ENCODE measurements at regions of chr5 and their contacts with region 1.

Region 1: DNA sequence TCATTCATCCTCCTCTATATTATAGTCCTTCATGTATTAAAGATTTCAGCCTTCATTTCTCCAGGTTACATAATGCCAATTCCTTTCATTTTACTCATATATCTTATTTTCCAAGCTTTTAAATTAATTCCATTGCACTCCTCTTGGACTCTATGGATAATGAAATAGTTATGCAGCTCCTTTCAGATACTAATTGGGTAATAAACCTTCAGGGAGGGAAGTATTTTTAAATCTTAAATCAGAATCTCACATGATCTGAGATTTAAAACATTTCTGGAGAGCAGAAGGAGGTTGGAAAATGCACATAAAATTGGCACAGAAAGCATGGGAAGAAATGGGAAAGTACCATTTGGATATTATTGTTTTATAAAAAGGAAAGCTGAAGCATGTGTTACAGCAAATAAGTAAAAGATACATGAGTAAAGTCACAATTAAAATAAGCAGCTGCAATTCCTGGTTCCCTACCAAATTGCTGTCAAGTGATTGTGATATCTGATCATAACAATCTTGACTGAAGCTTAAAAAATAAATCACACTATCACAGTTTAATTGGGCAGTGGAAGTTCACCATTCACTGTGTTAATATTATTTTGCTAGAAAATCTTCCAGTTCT is 257.9 kb upstream of the NREP start:
- DNase-seq: no peak
- H3K4me3 ChIP-seq: no peak overlapping the region
- H3K27ac ChIP-seq: no peak overlapping the region
- H3K4me1 ChIP-seq: no peaks in the 10 kb centered on the region
- H3K27me3 ChIP-seq: no peaks in the 10 kb centered on the region
- CTCF ChIP-seq: no peak
- POLR2A ChIP-seq: no peak

Region 2: DNA sequence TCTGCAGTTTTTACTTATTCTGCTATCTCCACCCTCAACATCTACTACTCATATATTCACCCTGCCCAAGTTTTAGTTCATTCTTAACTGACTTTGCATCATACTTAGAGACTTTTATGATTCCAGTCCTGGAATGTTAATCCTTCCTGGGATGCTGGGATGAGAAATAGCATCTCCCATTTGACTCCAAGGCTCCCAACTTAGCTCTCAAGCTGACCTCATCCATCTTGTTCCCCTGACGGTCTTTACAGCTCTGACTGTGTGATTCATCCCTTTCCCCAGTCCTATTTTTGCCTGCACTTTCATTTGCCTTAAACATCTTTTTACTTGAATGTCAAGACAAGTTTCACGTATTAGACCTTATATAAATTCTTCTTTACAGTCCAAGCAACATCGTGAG is 106.4 kb after region 1 on chr5:
- CTCF ChIA-PET with region 1: no interaction called
- POLR2A ChIA-PET with region 1: no interaction called
- dilution Hi-C with region 1: no loop called
- intact Hi-C with region 1: loop called (anchors 5 kb)
- DNase-seq: no peak
- H3K4me3 ChIP-seq: no peak overlapping the region
- H3K27ac ChIP-seq: no peak overlapping the region
- H3K4me1 ChIP-seq: no peaks in the 10 kb centered on the region
- H3K27me3 ChIP-seq: no peaks in the 10 kb centered on the region
- CTCF ChIP-seq: no peak
- POLR2A ChIP-seq: no peak

Measured in endothelial cell of umbilical vein (primary cell).